ENCODE measurements at regions of chr2 and their contacts with region 1.

Region 1: GRCh38 chr2:101518578-101519492 is 43.9 kb upstream of the RFX8 start:
- DNase-seq: peak; percentile 52 to 95
- H3K4me3 ChIP-seq: peak overlapping the region; percentile 14; the same call in 1 of the 2 replicates
- H3K27ac ChIP-seq: peak overlapping the region; percentile 98
- H3K4me1 ChIP-seq: peaks cover 55% of the 10 kb centered on the region
- H3K27me3 ChIP-seq: no peaks in the 10 kb centered on the region
- CTCF ChIP-seq: peak; percentile 55; the same call in 1 of the 2 replicates

Region 2: DNA sequence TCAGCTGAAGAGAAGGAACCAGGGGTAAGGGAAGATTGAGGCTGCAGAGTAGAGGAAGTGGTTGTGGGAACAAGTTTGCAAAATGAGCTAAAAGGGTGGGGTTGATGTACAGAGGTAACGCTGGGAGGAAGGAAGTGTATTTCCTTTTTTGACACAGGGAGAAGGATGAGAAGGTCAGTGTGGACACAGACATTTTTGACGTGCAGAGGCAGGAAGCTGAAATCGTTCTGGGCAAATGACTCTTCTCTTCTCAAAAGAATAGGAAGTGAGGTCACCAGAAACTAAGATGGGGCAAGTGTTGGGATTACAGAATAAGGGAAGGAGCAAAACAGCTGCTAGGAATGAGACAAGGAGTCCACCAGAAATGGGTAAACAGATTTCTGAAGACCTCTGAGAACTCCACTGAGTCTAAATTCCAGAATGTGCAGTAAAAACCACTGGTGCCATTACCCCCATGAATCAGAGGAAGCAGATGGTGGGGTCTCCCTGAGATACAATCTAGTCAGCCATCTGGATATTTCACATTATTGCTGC is 190.3 kb before region 1 on chr2:
- CTCF ChIA-PET with region 1: interaction called, 24 read pairs
- POLR2A ChIA-PET with region 1: no interaction called
- intact Hi-C with region 1: no loop called
- DNase-seq: peak in 1 of 2 experiments; percentile 94
- H3K4me3 ChIP-seq: peak overlapping the region; percentile 54
- H3K27ac ChIP-seq: peak overlapping the region; percentile 99
- H3K4me1 ChIP-seq: peaks cover 49% of the 10 kb centered on the region
- H3K27me3 ChIP-seq: no peaks in the 10 kb centered on the region
- CTCF ChIP-seq: no peak

Region 3: DNA sequence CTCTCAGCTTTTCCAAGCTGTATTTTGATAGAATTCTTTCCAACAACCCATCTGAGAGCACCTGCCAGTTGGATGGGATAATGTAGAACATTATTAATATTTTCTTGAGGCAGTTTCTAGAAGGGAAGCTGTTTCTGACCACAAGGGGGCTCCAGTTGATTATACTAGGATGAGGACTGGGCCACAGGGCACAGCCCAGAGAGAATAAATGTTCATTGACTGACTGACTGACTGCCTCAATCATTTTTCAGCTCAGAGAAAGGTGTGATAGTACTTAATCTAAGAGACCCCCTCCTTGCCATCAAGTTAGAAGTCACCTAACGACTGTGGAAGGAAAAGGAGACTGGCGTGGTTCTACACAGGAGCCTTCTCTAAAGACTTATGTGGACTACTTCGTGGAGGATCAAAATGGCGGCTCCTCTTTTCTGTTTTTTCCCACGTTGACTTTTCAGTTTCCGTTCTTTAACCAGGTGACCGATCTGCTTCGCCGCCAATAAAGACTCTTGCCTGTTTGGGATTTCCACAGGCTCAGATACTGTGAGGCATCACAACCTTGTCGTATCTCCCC is 99.7 kb before region 1 on chr2:
- CTCF ChIA-PET with region 1: interaction called, 3 read pairs
- POLR2A ChIA-PET with region 1: no interaction called
- intact Hi-C with region 1: loop called (anchors 1 kb)
- DNase-seq: peak; percentile 34 to 47
- H3K4me3 ChIP-seq: no peak overlapping the region
- H3K27ac ChIP-seq: no peak overlapping the region
- H3K4me1 ChIP-seq: 0 out of 2 replicates have a peak, but pooled peaks cover 5% of the 10 kb centered on the region
- H3K27me3 ChIP-seq: no peaks in the 10 kb centered on the region
- CTCF ChIP-seq: peak; percentile 90

Region 4: DNA sequence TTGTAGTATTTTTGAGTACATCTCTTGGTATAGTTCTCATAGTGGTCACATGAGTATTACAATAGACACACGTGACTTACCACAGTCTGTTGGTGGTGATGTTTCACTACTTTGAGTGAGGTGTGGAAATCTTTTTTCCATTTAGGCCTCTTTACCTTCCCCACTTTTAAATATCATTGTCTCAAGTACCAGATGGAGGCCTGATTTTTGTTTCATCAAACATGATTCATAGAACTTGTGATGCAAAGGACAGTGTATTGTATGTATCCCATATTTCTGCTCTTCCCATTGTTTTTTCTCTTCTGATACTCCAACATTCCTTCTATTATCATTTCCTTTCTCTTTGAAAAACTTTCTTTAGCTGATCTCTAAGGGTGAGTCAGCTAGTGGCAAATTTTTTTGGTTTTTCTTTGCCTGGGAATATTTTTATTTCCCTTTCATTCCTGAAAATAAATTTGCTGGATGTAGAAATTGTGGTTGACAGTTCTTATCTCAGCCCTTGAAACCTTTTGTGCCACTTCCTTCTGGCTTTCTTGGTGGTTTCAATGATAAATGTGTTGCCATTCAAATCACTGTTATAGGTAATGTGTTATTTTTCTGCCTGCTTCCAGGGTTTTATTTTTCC is 76.7 kb before region 1 on chr2:
- CTCF ChIA-PET with region 1: no interaction called
- POLR2A ChIA-PET with region 1: no interaction called
- intact Hi-C with region 1: no loop called
- DNase-seq: no peak
- H3K4me3 ChIP-seq: no peak overlapping the region
- H3K27ac ChIP-seq: peak overlapping the region; percentile 40; the same call in 1 of the 2 replicates
- H3K4me1 ChIP-seq: peaks cover 12% of the 10 kb centered on the region
- H3K27me3 ChIP-seq: no peaks in the 10 kb centered on the region
- CTCF ChIP-seq: no peak

Region 5: GRCh38 chr2:101697124-101698013 is 178.5 kb after region 1 on chr2 and contains the start of gene MAP4K4:
- CTCF ChIA-PET with region 1: interaction called, 25 read pairs
- POLR2A ChIA-PET with region 1: no interaction called
- intact Hi-C with region 1: loop called (anchors 1 kb)
- DNase-seq: peak; percentile 59 to 74
- H3K4me3 ChIP-seq: peak within 1 kb of the TSS; percentile 96
- H3K27ac ChIP-seq: peak within 1 kb of the TSS; percentile 59
- H3K4me1 ChIP-seq: peaks cover 21% of the 10 kb centered on the region
- H3K27me3 ChIP-seq: no peaks in the 10 kb centered on the region
- CTCF ChIP-seq: peak; percentile 24; the same call in 1 of the 2 replicates
- total RNA-seq, gene MAP4K4: 100 and 129 TPM in 2 replicates

Region 6: DNA sequence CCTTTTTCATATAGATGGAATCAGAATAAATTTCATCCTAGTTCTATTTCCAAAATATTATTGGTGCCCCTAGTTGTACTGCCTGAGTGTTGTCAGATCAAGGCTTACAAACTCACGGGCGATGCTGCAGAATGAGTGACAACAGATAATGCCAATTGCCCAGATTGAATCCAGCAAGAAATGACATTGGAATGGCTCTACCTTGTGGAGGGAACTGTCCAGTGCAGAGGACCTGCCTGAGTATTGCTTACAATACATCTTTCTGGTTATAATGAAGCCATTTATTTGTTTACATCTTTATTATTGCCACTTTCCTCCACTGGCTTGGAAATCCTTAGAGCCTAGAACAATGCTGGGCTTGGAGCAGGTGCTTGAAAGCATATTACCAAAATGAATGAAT is 465.1 kb after region 1 on chr2:
- CTCF ChIA-PET with region 1: no interaction called
- POLR2A ChIA-PET with region 1: no interaction called
- intact Hi-C with region 1: loop called (anchors 5 kb)
- DNase-seq: no peak
- H3K4me3 ChIP-seq: peak overlapping the region; percentile 6; the same call in 1 of the 2 replicates
- H3K27ac ChIP-seq: peak overlapping the region; percentile 93
- H3K4me1 ChIP-seq: peaks cover 60% of the 10 kb centered on the region
- H3K27me3 ChIP-seq: no peaks in the 10 kb centered on the region
- CTCF ChIP-seq: peak; percentile 48